Astrocyte of the cerebellum (primary cell): ENCODE measurements at regions of chr1 and their contacts with region 1.

Region 1: GRCh38 chr1:45864167-45865106 is 61.0 kb downstream of the MAST2 start:
- DNase-seq: peak; percentile 12
- H3K4me3 ChIP-seq: peak overlapping the region; percentile 34
- CTCF ChIP-seq: no peak

Region 2: DNA sequence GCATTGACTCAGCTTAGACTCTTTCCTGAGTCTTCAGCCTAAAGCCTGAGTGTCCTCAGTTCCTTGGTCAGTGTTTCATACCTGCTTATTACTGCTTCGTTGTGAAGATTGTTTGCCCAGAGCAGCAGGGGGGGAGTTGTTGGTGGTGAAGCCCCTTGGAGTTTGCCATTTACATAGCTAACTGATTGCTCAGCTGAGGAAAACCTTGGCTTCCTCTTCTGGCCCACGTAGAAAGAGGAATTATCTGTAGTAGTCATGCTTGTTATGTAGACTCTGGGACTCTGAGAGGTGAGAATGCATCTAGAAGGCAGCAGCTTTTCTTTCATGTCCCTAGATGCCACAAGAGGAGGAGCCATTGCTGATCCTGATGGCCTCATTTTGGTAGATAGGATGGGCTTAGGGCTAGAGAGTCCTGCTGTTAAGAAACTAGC is 64.8 kb after region 1 on chr1:
- in situ Hi-C with region 1: loop called (anchors 5 kb)
- DNase-seq: peak; percentile 95
- H3K4me3 ChIP-seq: no peak overlapping the region
- CTCF ChIP-seq: no peak